PC-9 (cell line): ENCODE measurements at regions of chr10 and their contacts with region 1.

Region 1: GRCh38 chr10:114320249-114321116 is 81.4 kb downstream of the VWA2 start:
- DNase-seq: peak; percentile 94 to 97
- H3K4me3 ChIP-seq: no peak overlapping the region; the same call in 1 of the 2 replicates
- H3K27ac ChIP-seq: peak overlapping the region; percentile 89
- H3K4me1 ChIP-seq: peaks cover 42% of the 10 kb centered on the region
- H3K27me3 ChIP-seq: no peaks in the 10 kb centered on the region
- CTCF ChIP-seq: no peak

Region 2: GRCh38 chr10:113843972-113844485 is 476.5 kb before region 1 on chr10:
- CTCF ChIA-PET with region 1: no interaction called
- POLR2A ChIA-PET with region 1: no interaction called
- intact Hi-C with region 1: no loop called
- DNase-seq: no peak
- H3K4me3 ChIP-seq: no peak overlapping the region
- H3K27ac ChIP-seq: no peak overlapping the region
- H3K4me1 ChIP-seq: no peaks in the 10 kb centered on the region
- H3K27me3 ChIP-seq: no peaks in the 10 kb centered on the region
- CTCF ChIP-seq: no peak

Region 3: GRCh38 chr10:114346271-114347031 is 26.0 kb after region 1 on chr10:
- CTCF ChIA-PET with region 1: no interaction called
- POLR2A ChIA-PET with region 1: no interaction called
- intact Hi-C with region 1: loop called (anchors 1 kb)
- DNase-seq: peak in 1 of 2 experiments; percentile 68
- H3K4me3 ChIP-seq: no peak overlapping the region
- H3K27ac ChIP-seq: no peak overlapping the region
- H3K4me1 ChIP-seq: no peaks in the 10 kb centered on the region
- H3K27me3 ChIP-seq: no peaks in the 10 kb centered on the region
- CTCF ChIP-seq: no peak

Region 4: DNA sequence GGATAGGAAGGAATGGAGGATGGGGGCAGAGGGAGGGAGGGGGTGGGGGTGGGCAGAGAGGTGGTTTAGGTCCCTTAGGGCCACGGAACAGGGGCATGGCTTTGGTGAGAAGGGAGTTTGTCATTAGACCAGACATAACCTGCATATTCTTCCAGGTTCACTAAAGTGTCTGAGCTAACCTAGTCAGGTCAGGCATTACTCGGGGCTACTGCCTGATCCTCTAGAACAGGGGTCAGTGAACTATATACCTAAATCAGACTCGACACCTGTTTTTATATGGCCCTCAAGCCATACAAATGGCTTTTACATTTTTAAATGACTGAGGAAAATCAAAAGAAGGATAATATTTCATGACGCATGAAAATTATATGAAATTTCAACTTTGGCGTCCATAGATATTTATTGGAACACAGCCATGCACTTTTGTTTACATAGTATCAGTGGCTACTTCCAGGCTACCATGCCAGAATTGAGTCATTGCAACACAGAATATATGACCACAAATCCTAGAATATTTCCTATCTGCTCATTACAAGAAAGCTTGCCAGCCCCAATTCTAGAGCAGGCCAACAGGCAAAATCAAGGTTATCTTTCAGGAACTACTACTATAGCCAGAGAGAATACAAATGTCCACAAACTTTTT is 54.4 kb after region 1 on chr10:
- CTCF ChIA-PET with region 1: no interaction called
- POLR2A ChIA-PET with region 1: no interaction called
- intact Hi-C with region 1: loop called (anchors 1 kb)
- DNase-seq: peak in 1 of 2 experiments; percentile 83
- H3K4me3 ChIP-seq: no peak overlapping the region
- H3K27ac ChIP-seq: no peak overlapping the region
- H3K4me1 ChIP-seq: peaks cover 14% of the 10 kb centered on the region
- H3K27me3 ChIP-seq: no peaks in the 10 kb centered on the region
- CTCF ChIP-seq: no peak

Region 5: DNA sequence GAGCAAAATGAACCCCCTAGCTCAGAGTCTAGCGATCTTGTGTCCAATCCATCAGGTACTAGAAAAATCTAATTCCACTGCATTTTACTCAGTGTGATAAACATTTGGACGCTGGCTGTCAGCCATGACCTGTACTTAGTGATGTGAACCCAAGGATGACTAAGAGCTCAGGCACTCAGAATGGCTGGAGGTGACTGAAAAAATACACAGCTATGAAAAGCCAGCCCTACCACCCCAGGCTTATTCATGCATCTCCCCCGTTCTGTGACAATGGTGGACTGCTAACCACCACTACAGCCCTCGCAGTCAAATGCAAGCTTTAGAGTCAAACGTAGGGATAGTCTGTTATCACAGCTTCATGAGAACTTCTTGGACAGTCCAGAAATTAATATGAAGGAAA is 68.9 kb after region 1 on chr10:
- CTCF ChIA-PET with region 1: no interaction called
- POLR2A ChIA-PET with region 1: no interaction called
- intact Hi-C with region 1: loop called (anchors 1 kb)
- DNase-seq: peak; percentile 67 to 85
- H3K4me3 ChIP-seq: no peak overlapping the region
- H3K27ac ChIP-seq: no peak overlapping the region
- H3K4me1 ChIP-seq: peaks cover 32% of the 10 kb centered on the region
- H3K27me3 ChIP-seq: no peaks in the 10 kb centered on the region
- CTCF ChIP-seq: no peak

Region 6: GRCh38 chr10:114403541-114404161 is 83.2 kb after region 1 on chr10:
- CTCF ChIA-PET with region 1: no interaction called
- POLR2A ChIA-PET with region 1: no interaction called
- intact Hi-C with region 1: loop called (anchors 5 kb)
- DNase-seq: peak in 1 of 2 experiments; percentile 36
- H3K4me3 ChIP-seq: peak overlapping the region; percentile 75
- H3K27ac ChIP-seq: peak overlapping the region; percentile 46
- H3K4me1 ChIP-seq: peaks cover 32% of the 10 kb centered on the region
- H3K27me3 ChIP-seq: no peaks in the 10 kb centered on the region
- CTCF ChIP-seq: peak; percentile 37; the same call in 1 of the 2 replicates

Region 7: GRCh38 chr10:114412907-114413386 is 92.5 kb after region 1 on chr10:
- CTCF ChIA-PET with region 1: no interaction called
- POLR2A ChIA-PET with region 1: no interaction called
- intact Hi-C with region 1: loop called (anchors 1 kb)
- DNase-seq: peak; percentile 63 to 95
- H3K4me3 ChIP-seq: no peak overlapping the region; the same call in 1 of the 2 replicates
- H3K27ac ChIP-seq: peak overlapping the region; percentile 88
- H3K4me1 ChIP-seq: peaks cover 45% of the 10 kb centered on the region
- H3K27me3 ChIP-seq: no peaks in the 10 kb centered on the region
- CTCF ChIP-seq: no peak

Region 8: GRCh38 chr10:115171392-115171960 is 851.0 kb after region 1 on chr10:
- CTCF ChIA-PET with region 1: no interaction called
- POLR2A ChIA-PET with region 1: no interaction called
- intact Hi-C with region 1: no loop called
- DNase-seq: no peak
- H3K4me3 ChIP-seq: no peak overlapping the region
- H3K27ac ChIP-seq: no peak overlapping the region
- H3K4me1 ChIP-seq: no peaks in the 10 kb centered on the region
- H3K27me3 ChIP-seq: no peaks in the 10 kb centered on the region
- CTCF ChIP-seq: peak; percentile 62